ENCODE measurements at regions of chr12 and their contacts with region 1.

Region 1: DNA sequence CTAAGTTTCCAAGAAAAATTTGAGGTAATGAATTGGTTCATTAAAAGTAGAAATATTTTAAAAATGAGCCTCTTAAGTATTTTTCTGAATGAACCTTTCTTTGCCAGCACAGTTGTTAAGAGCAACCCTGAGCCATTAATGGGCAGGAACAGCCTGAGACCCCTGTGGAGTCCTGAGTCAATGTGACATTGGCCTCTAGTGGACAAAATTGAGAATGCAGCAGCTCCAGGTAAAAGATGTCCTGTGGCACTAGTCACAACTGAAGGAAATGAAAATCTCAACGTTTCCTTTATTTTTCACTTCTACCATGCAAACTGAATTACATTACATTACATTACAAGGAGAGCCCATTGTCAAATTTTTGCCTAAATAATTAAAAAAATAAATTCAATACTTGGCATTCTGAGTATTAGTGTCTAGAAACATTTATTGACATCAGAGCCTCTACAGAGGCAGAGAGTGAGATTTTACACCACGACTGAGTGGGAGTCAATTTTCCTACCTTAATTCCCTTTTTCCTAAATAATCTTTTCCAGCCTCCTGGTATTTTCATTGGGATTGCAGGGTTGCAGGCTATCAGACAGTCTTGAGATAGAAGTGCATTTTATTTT is 135.7 kb downstream of the PPM1H start:
- DNase-seq: peak; percentile 32 to 52 (median 44)
- H3K4me3 ChIP-seq: no peak overlapping the region
- H3K4me3 Mint-ChIP-seq: no peak overlapping the region
- H3K27ac ChIP-seq: no peak overlapping the region
- H3K27ac Mint-ChIP-seq: no peak overlapping the region
- H3K4me1 ChIP-seq: no peaks in the 10 kb centered on the region
- H3K4me1 Mint-ChIP-seq: peaks cover 0 to 1% (median 0%) of the 10 kb centered on the region in 4 donors
- H3K27me3 ChIP-seq: no peaks in the 10 kb centered on the region
- H3K27me3 Mint-ChIP-seq: peaks cover 4 to 5% of the 10 kb centered on the region in 2 donors

Region 2: DNA sequence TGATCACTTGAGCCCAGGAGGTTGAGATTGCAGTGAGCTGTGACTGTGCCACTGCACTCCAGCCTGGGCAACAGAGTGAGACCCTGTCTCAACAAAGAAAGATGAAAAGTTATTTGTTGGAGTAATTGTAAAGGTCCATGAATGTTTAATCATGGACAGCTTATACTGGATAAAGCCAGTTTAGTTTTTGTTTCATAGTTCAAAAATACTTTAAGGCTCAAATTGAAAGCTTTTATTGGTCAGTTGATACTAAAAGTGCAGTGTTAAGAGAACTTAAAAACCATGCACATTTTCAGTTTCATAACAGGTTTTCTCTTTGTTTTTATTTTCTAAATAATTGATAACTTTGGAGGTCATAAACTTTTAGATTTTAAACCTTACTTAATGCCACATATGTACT is 224.2 kb before region 1 on chr12:
- CTCF ChIA-PET with region 1: interaction called, 253 read pairs
- POLR2A ChIA-PET with region 1: interaction called, 3 read pairs
- intact Hi-C with region 1: no loop called
- DNase-seq: no peak
- H3K4me3 ChIP-seq: no peak overlapping the region
- H3K4me3 Mint-ChIP-seq: no peak overlapping the region
- H3K27ac ChIP-seq: no peak overlapping the region
- H3K27ac Mint-ChIP-seq: no peak overlapping the region
- H3K4me1 ChIP-seq: no peaks in the 10 kb centered on the region
- H3K4me1 Mint-ChIP-seq: no peaks in the 10 kb centered on the region
- H3K27me3 ChIP-seq: no peaks in the 10 kb centered on the region
- H3K27me3 Mint-ChIP-seq: no peaks in the 10 kb centered on the region

Region 3: GRCh38 chr12:62581288-62582064 is 217.8 kb before region 1 on chr12:
- CTCF ChIA-PET with region 1: interaction called, 253 read pairs
- POLR2A ChIA-PET with region 1: interaction called, 8 read pairs
- intact Hi-C with region 1: loop called (anchors 1 kb)
- DNase-seq: peak in 4 of 5 donors; percentile 34 to 49 (median 38)
- H3K4me3 ChIP-seq: no peak overlapping the region
- H3K4me3 Mint-ChIP-seq: no peak overlapping the region
- H3K27ac ChIP-seq: no peak overlapping the region
- H3K27ac Mint-ChIP-seq: no peak overlapping the region
- H3K4me1 ChIP-seq: no peaks in the 10 kb centered on the region
- H3K4me1 Mint-ChIP-seq: peaks cover 0 to 2% (median 0%) of the 10 kb centered on the region in 4 donors
- H3K27me3 ChIP-seq: no peaks in the 10 kb centered on the region
- H3K27me3 Mint-ChIP-seq: no peaks in the 10 kb centered on the region

Region 4: GRCh38 chr12:62785941-62786559 is 13.2 kb before region 1 on chr12:
- CTCF ChIA-PET with region 1: interaction called, 67 read pairs
- POLR2A ChIA-PET with region 1: no interaction called
- intact Hi-C with region 1: no loop called
- DNase-seq: no peak
- H3K4me3 ChIP-seq: no peak overlapping the region
- H3K4me3 Mint-ChIP-seq: peak overlapping the region in 1 of 8 donors; percentile 45
- H3K27ac ChIP-seq: no peak overlapping the region
- H3K27ac Mint-ChIP-seq: no peak overlapping the region
- H3K4me1 ChIP-seq: no peaks in the 10 kb centered on the region
- H3K4me1 Mint-ChIP-seq: peaks cover 0 to 4% (median 0%) of the 10 kb centered on the region in 4 donors
- H3K27me3 ChIP-seq: no peaks in the 10 kb centered on the region
- H3K27me3 Mint-ChIP-seq: peaks cover 0 to 8% of the 10 kb centered on the region in 2 donors

Region 5: GRCh38 chr12:62813031-62813829 is 14.0 kb after region 1 on chr12:
- CTCF ChIA-PET with region 1: interaction called, 41 read pairs
- POLR2A ChIA-PET with region 1: no interaction called
- intact Hi-C with region 1: no loop called
- DNase-seq: peak in 2 of 5 donors; percentile 5
- H3K4me3 ChIP-seq: no peak overlapping the region
- H3K4me3 Mint-ChIP-seq: peak overlapping the region in 6 of 8 donors; percentile 31 to 72 (median 49)
- H3K27ac ChIP-seq: no peak overlapping the region
- H3K27ac Mint-ChIP-seq: peak overlapping the region in 1 of 7 donors; percentile 70
- H3K4me1 ChIP-seq: peaks cover 10% of the 10 kb centered on the region
- H3K4me1 Mint-ChIP-seq: peaks cover 5 to 12% (median 9%) of the 10 kb centered on the region in 4 donors
- H3K27me3 ChIP-seq: peaks cover 6% of the 10 kb centered on the region
- H3K27me3 Mint-ChIP-seq: peaks cover 11 to 17% of the 10 kb centered on the region in 2 donors

Region 6: DNA sequence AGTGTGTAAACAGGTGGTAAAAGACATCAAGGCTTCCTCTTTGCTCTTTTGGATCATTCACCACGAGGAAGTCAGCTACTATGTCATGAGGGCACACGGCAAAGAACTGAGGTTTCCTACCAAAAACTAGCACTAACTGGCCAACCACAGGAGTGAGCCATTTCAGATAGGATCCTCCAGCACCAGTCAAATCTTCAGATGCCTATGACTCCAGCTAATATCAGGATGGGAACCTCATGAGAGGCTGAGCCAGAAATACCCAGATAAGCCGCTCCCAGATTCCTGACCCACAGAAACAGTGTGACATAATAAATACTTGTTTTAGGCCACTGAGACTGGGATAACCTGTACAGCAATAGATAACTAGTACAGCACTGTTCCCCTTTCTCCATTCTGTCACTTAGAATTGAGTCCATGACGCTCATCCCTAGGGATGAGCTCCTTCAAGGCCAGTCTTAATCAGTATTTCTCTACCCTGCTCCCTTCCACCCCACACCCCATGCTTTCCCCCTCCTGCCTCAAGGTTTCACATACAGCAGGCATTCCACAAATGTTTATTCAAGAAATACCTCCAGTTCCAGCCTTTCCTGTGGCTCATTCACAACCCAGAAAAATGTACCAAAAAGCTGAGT is 67.3 kb after region 1 on chr12:
- CTCF ChIA-PET with region 1: no interaction called
- POLR2A ChIA-PET with region 1: no interaction called
- intact Hi-C with region 1: no loop called
- DNase-seq: no peak
- H3K4me3 ChIP-seq: no peak overlapping the region
- H3K4me3 Mint-ChIP-seq: no peak overlapping the region
- H3K27ac ChIP-seq: no peak overlapping the region
- H3K27ac Mint-ChIP-seq: no peak overlapping the region
- H3K4me1 ChIP-seq: no peaks in the 10 kb centered on the region
- H3K4me1 Mint-ChIP-seq: no peaks in the 10 kb centered on the region
- H3K27me3 ChIP-seq: no peaks in the 10 kb centered on the region
- H3K27me3 Mint-ChIP-seq: peaks cover 11 to 20% of the 10 kb centered on the region in 2 donors

Measured in CD4-positive, alpha-beta memory T cell (primary cell).